Head of caudate nucleus (tissue), 42 donors: ENCODE measurements at regions of chr16 and their contacts with region 1.

Region 1: GRCh38 chr16:53054670-53055485 is at the start of gene CHD9:
- DNase-seq: peak; percentile 62 to 91 (median 82)

Region 2: GRCh38 chr16:52740766-52741165 is 314.1 kb before region 1 on chr16:
- intact Hi-C with region 1: no loop called
- DNase-seq: no peak

Region 3: DNA sequence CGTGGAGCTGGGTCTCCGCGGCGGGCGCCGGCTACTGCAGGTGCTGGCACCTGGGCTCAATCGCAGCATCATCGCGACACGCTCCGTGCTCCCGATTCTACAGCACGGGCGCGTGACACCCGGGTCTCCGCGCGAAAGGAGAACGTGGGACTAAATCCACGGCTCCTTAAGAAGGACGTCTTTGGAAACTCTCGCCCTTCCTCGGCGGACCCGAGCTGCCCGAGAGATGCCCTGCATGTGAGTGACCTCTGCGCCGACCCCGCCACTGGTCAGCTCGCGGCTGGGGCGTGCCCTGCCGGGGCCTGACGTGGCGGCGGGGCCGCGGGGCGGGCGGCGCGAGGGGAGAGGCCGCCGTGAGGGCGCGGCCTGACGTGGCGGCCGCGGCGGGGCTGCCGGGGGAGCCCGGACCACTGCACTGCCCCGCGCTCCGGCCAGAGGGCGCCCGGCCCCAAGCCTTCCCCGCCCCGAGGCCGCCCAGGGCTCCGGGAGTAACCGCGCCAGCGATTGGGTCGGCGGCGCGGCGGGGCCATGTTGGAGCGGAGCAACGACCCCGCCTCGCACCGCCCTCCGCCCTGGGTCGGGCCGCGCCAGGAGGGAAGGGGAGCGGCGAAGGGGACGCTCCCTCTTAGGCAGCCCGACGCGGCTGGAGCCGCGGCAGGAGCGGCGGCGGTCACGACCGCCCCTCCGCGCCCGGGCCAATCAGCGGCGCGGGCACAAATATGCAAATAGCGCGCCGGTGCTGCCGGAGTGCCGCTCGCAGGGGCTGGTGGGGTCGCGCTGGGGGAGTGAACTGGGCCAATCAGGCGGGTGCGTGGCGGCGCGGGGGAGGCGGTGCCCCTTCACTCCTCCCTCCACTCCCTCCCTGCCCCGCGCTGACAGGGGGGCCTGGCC is 75.5 kb after region 1 on chr16:
- intact Hi-C with region 1: loop called (anchors 2 kb)
- DNase-seq: peak; percentile 88 to 99 (median 96)

Region 4: GRCh38 chr16:53207810-53208752 is 153.2 kb after region 1 on chr16:
- intact Hi-C with region 1: loop called (anchors 5 kb)
- DNase-seq: peak; percentile 10 to 87 (median 64)

Region 5: GRCh38 chr16:53282975-53283946 is 228.4 kb after region 1 on chr16:
- intact Hi-C with region 1: loop called (anchors 10 kb)
- DNase-seq: peak in 5 of 42 donors; percentile 14 to 55 (median 27)